MCF 10A (cell line): ENCODE measurements at regions of chr12 and their contacts with region 1.

Region 1: DNA sequence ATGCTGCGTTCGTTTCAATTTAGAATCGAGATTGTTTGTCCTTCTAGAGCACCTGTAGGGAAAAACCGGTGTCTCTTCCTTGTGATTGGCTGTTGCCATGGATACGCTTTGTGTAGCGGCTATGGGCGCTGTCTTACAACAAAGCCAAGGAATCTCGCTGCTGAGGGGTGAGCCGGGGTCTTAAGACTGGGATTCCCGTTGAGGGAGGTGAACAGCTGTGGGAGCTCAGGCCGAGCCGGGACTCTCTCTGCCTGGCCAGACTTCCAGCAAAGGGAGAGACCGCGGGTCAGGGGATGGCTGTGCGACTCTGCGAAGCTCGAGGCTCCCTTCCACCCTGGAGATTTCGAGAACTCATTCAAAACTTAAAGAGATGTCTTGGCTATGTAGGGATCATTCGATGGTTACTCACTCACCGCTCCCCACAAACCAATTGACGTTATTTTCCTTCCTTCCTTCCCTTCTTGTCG is at the starts of genes LRRIQ1 and TSPAN19:
- DNase-seq: peak; percentile 93
- H3K4me3 Mint-ChIP-seq: peak within 1 kb of the TSS; percentile 92
- H3K27ac Mint-ChIP-seq: peak within 1 kb of the TSS; percentile 88
- H3K4me1 Mint-ChIP-seq: no peaks in the 10 kb centered on the region
- H3K27me3 Mint-ChIP-seq: peaks cover 11% of the 10 kb centered on the region
- CTCF ChIP-seq: no peak
- total RNA-seq, gene LRRIQ1: 0.70 and 1.5 TPM in 2 replicates
- total RNA-seq, gene TSPAN19: 0.63 and 1.1 TPM in 2 replicates

Region 2: GRCh38 chr12:84741692-84742091 is 294.6 kb before region 1 on chr12:
- CTCF ChIA-PET with region 1: no interaction called
- POLR2A ChIA-PET with region 1: no interaction called
- intact Hi-C with region 1: loop called (anchors 10 kb)
- DNase-seq: no peak
- H3K4me3 Mint-ChIP-seq: no peak overlapping the region
- H3K27ac Mint-ChIP-seq: no peak overlapping the region
- H3K4me1 Mint-ChIP-seq: peaks cover 19% of the 10 kb centered on the region
- H3K27me3 Mint-ChIP-seq: no peaks in the 10 kb centered on the region
- CTCF ChIP-seq: no peak